PC-9 (cell line): ENCODE measurements at regions of chr3 and their contacts with region 1.

Region 1: DNA sequence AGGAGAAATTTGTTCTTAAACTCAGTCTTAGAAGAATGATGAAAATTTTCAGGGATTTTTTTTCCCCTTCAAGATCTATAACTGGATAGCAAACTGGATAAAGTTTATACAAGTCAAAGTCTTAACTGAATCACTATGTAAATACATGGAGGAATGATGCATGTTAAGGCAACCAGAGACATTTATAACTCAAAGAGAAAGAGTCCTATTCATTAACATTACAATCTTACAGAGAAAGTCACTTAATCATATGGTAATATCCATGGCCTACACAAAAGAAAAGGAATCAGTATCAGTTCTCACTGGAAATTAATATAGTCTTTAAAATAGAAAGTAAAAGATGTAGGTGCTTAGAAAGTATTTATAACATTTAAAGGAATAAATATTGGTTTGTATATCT is 869.1 kb downstream of the TBL1XR1 start:
- DNase-seq: no peak
- H3K4me3 ChIP-seq: no peak overlapping the region
- H3K27ac ChIP-seq: no peak overlapping the region
- H3K4me1 ChIP-seq: no peaks in the 10 kb centered on the region
- H3K27me3 ChIP-seq: no peaks in the 10 kb centered on the region
- CTCF ChIP-seq: no peak

Region 2: GRCh38 chr3:176359211-176359610 is 31.0 kb after region 1 on chr3:
- CTCF ChIA-PET with region 1: no interaction called
- POLR2A ChIA-PET with region 1: interaction called, 10 read pairs
- intact Hi-C with region 1: no loop called
- DNase-seq: no peak
- H3K4me3 ChIP-seq: no peak overlapping the region
- H3K27ac ChIP-seq: no peak overlapping the region
- H3K4me1 ChIP-seq: no peaks in the 10 kb centered on the region
- H3K27me3 ChIP-seq: no peaks in the 10 kb centered on the region
- CTCF ChIP-seq: peak; percentile 50; the same call in 1 of the 2 replicates